PC-9 (cell line): ENCODE measurements at regions of chr10 and their contacts with region 1.

Region 1: GRCh38 chr10:104099941-104100340 is 14.3 kb upstream of the COL17A1 start:
- DNase-seq: no peak
- H3K4me3 ChIP-seq: no peak overlapping the region
- H3K27ac ChIP-seq: peak overlapping the region; percentile 57
- H3K4me1 ChIP-seq: peaks cover 21% of the 10 kb centered on the region
- H3K27me3 ChIP-seq: no peaks in the 10 kb centered on the region
- CTCF ChIP-seq: no peak

Region 2: GRCh38 chr10:104130041-104130440 is 30.1 kb after region 1 on chr10:
- CTCF ChIA-PET with region 1: no interaction called
- POLR2A ChIA-PET with region 1: no interaction called
- intact Hi-C with region 1: loop called (anchors 2 kb)
- DNase-seq: no peak
- H3K4me3 ChIP-seq: no peak overlapping the region
- H3K27ac ChIP-seq: no peak overlapping the region
- H3K4me1 ChIP-seq: no peaks in the 10 kb centered on the region
- H3K27me3 ChIP-seq: no peaks in the 10 kb centered on the region
- CTCF ChIP-seq: no peak